B cell (primary cell): ENCODE measurements at regions of chr17 and their contacts with region 1.

Region 1: GRCh38 chr17:58517734-58518609 is 3.5 kb upstream of the MTMR4 start:
- DNase-seq: peak; percentile 100
- ATAC-seq: peak; percentile 78
- H3K4me3 ChIP-seq: peak overlapping the region; percentile 88 to 99 (median 93)
- H3K4me3 Mint-ChIP-seq: peak overlapping the region; percentile 97
- H3K27ac ChIP-seq: peak overlapping the region; percentile 83 to 85
- H3K27ac Mint-ChIP-seq: peak overlapping the region; percentile 97
- H3K4me1 ChIP-seq: peaks cover 35 to 54% of the 10 kb centered on the region in 2 donors
- H3K4me1 Mint-ChIP-seq: peaks cover 43% of the 10 kb centered on the region
- H3K27me3 ChIP-seq: no peaks in the 10 kb centered on the region
- H3K27me3 Mint-ChIP-seq: no peaks in the 10 kb centered on the region
- CTCF ChIP-seq: no peak

Region 2: DNA sequence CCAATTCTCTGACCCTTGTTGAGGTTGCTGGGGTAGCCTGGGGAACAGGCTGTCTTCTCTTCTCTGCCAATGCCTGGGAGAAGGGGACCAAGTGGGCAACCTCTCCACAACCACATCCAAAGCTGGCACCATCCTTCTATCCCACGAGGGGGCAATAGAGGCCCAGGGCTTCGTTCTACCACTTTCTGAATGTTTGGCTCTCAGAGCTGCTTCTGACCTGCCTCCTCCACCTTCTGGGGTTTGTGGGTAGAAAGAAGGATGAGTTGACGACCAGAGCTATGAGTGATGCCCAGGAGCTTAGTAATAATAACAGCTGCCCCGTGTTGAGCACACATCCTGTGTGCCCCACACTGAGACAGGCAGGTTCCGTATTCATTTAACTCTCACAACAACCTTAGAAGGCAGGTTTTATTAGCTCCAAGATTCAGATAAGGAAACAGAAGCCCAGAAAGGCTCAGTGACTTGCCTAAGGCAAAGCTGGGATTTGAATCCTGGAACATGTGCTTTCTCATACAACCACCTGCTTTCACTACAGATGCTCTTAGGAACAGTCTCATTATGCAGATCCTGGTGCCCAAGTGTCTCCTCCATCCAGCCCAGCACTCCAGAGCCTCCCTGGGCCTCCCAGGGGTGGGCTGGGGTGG is 200.4 kb before region 1 on chr17:
- CTCF ChIA-PET with region 1: interaction called, 8 read pairs
- POLR2A ChIA-PET with region 1: interaction called, 3 read pairs
- intact Hi-C with region 1: loop called (anchors 1 kb)
- DNase-seq: peak; percentile 87
- ATAC-seq: peak; percentile 97
- H3K4me3 ChIP-seq: no peak overlapping the region
- H3K4me3 Mint-ChIP-seq: peak overlapping the region; percentile 33
- H3K27ac ChIP-seq: peak overlapping the region; percentile 53 to 76
- H3K27ac Mint-ChIP-seq: peak overlapping the region; percentile 96
- H3K4me1 ChIP-seq: peaks cover 11 to 12% of the 10 kb centered on the region in 2 donors
- H3K4me1 Mint-ChIP-seq: peaks cover 14% of the 10 kb centered on the region
- H3K27me3 ChIP-seq: no peaks in the 10 kb centered on the region
- H3K27me3 Mint-ChIP-seq: no peaks in the 10 kb centered on the region
- CTCF ChIP-seq: peak; percentile 84

Region 3: GRCh38 chr17:58417300-58418092 is 100.5 kb before region 1 on chr17 and contains the start of gene RNF43:
- CTCF ChIA-PET with region 1: interaction called, 3 read pairs
- POLR2A ChIA-PET with region 1: interaction called, 4 read pairs
- intact Hi-C with region 1: loop called (anchors 1 kb)
- DNase-seq: peak; percentile 96
- ATAC-seq: peak; percentile 100
- H3K4me3 ChIP-seq: peak within 1 kb of the TSS in 1 of 5 experiments; percentile 20
- H3K4me3 Mint-ChIP-seq: peak within 1 kb of the TSS; percentile 8
- H3K27ac ChIP-seq: peak within 1 kb of the TSS; percentile 61 to 65
- H3K27ac Mint-ChIP-seq: peak within 1 kb of the TSS; percentile 51
- H3K4me1 ChIP-seq: peaks cover 14 to 16% of the 10 kb centered on the region in 2 donors
- H3K4me1 Mint-ChIP-seq: peaks cover 21% of the 10 kb centered on the region
- H3K27me3 ChIP-seq: no peaks in the 10 kb centered on the region
- H3K27me3 Mint-ChIP-seq: no peaks in the 10 kb centered on the region
- CTCF ChIP-seq: peak; percentile 77
- total RNA-seq, gene RNF43: 2.5 and 3.2 TPM in 2 replicates

Region 4: GRCh38 chr17:58577642-58578091 is 59.7 kb after region 1 on chr17:
- CTCF ChIA-PET with region 1: interaction called, 13 read pairs
- POLR2A ChIA-PET with region 1: no interaction called
- intact Hi-C with region 1: no loop called
- DNase-seq: peak; percentile 66
- ATAC-seq: no peak
- H3K4me3 ChIP-seq: no peak overlapping the region
- H3K4me3 Mint-ChIP-seq: no peak overlapping the region
- H3K27ac ChIP-seq: no peak overlapping the region
- H3K27ac Mint-ChIP-seq: no peak overlapping the region
- H3K4me1 ChIP-seq: no peaks in the 10 kb centered on the region
- H3K4me1 Mint-ChIP-seq: no peaks in the 10 kb centered on the region
- H3K27me3 ChIP-seq: no peaks in the 10 kb centered on the region
- H3K27me3 Mint-ChIP-seq: no peaks in the 10 kb centered on the region
- CTCF ChIP-seq: peak; percentile 75

Region 5: DNA sequence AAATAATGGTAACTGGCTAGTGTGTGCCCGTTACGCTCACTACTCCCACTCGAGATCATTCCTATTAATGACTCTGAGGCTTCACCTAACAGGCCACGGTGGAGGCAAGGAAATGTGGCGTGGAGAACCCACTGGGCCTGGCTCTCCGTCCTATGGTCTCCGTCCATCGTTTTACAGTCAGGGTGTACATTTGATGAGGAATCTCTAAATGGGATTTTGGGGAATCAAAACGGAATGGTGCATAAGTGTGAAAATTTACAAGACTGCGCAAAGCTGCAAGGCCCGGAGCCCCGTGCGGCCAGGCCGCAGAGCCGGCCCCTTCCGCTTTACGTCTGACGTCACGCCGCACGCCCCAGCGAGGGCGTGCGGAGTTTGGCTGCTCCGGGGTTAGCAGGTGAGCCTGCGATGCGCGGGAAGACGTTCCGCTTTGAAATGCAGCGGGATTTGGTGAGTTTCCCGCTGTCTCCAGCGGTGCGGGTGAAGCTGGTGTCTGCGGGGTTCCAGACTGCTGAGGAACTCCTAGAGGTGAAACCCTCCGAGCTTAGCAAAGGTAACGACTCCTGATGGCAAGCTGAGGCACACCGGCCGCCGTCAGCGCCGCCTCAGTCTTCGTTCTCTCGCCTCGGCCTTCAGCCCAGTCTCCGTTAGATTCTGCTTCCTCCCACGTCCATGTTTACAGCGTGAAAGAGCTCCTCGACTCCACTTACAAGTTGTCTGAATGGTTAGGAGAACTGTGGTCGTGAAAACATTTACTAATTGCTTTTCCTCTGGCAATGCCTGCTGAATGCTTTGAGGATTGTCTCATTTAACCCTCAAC is 174.5 kb after region 1 on chr17 and contains the start of gene RAD51C:
- CTCF ChIA-PET with region 1: interaction called, 11 read pairs
- POLR2A ChIA-PET with region 1: interaction called, 4 read pairs
- intact Hi-C with region 1: loop called (anchors 1 kb)
- DNase-seq: peak; percentile 92
- ATAC-seq: peak; percentile 99
- H3K4me3 ChIP-seq: peak within 1 kb of the TSS; percentile 64 to 88 (median 81)
- H3K4me3 Mint-ChIP-seq: peak within 1 kb of the TSS; percentile 90
- H3K27ac ChIP-seq: peak within 1 kb of the TSS; percentile 66 to 70
- H3K27ac Mint-ChIP-seq: peak within 1 kb of the TSS; percentile 95
- H3K4me1 ChIP-seq: peaks cover 14 to 17% of the 10 kb centered on the region in 2 donors
- H3K4me1 Mint-ChIP-seq: peaks cover 24% of the 10 kb centered on the region
- H3K27me3 ChIP-seq: no peaks in the 10 kb centered on the region
- H3K27me3 Mint-ChIP-seq: no peaks in the 10 kb centered on the region
- CTCF ChIP-seq: no peak
- total RNA-seq, gene RAD51C: 33.2 and 35.0 TPM in 2 replicates

Region 6: DNA sequence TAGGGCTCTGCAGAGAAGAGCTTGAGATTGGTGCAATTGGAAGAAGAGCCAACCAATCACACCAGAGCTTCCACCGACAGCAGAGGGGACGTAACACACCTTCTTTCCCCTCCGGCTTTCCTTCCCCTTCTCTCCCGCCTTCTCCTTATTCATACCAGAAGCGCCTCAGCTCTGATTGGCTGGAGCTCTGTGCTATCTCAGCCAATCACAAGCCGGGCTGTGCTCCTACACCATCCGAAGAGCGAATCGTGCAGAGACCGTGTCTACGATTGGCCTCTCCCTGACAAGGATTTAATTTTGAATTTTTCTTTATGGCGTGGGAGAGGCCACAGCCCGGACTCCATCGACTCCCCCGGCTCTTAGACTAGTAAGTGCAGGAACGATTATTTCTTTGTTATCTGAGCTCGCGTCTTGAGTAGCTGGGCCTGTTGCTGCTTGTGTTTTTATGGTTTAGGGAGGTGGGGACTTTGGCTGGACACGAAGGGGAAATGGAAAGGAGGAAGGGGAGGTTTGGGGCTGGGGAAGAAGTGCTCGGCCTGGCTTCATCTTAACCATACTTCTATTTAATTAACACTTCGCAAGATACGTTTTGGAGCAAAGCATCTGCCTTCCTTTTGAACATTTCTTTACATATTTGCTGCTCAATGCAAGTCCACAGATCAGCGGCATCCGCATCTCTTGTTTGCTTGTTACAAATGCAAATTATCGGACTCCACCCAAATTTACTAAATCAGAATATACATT is 637.6 kb after region 1 on chr17 and contains the start of gene PRR11:
- CTCF ChIA-PET with region 1: no interaction called
- POLR2A ChIA-PET with region 1: no interaction called
- intact Hi-C with region 1: loop called (anchors 1 kb)
- DNase-seq: no peak
- ATAC-seq: peak; percentile 85
- H3K4me3 ChIP-seq: peak within 1 kb of the TSS; percentile 62 to 98 (median 96)
- H3K4me3 Mint-ChIP-seq: no peak within 1 kb of the TSS
- H3K27ac ChIP-seq: peak within 1 kb of the TSS; percentile 50 to 79
- H3K27ac Mint-ChIP-seq: no peak within 1 kb of the TSS
- H3K4me1 ChIP-seq: peaks cover 9 to 15% of the 10 kb centered on the region in 2 donors
- H3K4me1 Mint-ChIP-seq: peaks cover 13% of the 10 kb centered on the region
- H3K27me3 ChIP-seq: no peaks in the 10 kb centered on the region
- H3K27me3 Mint-ChIP-seq: no peaks in the 10 kb centered on the region
- CTCF ChIP-seq: no peak
- total RNA-seq, gene PRR11: 0.75 and 1.5 TPM in 2 replicates